AG04449 (cell line): ENCODE measurements at regions of chr3 and their contacts with region 1.

Region 1: GRCh38 chr3:58305882-58306711 is at the starts of genes HTD2 and RPP14:
- DNase-seq: peak; percentile 76
- H3K4me3 ChIP-seq: peak within 1 kb of the TSS; percentile 84
- CTCF ChIP-seq: peak; percentile 98

Region 2: DNA sequence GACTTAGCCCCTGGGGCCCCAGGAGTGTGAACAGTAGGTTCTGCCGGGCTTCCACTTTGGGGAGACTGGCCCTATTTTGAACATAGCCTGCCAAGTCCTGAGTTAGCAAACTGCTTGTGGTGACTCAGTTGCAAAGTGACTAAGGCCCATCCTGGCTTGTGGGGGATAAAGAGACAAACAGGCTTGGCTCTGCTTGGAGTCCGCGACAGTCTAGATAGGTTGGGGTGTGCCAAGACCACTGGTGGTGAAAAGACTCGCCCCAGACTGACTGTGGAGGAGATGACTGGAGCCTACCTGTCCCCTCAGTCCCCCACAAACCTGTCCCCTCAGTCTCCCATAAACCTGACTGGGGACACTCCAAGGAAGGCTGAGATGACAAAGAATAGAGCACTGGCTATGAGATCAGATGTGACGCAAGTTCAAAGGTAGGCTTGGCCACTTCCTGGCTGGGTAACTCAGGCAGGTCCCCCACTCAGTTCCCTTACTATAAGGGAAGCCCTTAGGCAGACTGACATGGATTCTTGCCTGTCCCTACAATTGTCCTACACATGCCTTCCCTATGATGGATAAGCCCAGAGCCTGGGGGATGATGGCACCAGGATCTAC is 99.6 kb before region 1 on chr3:
- CTCF ChIA-PET with region 1: interaction called, 25 read pairs
- POLR2A ChIA-PET with region 1: no interaction called
- DNase-seq: no peak
- H3K4me3 ChIP-seq: no peak overlapping the region
- CTCF ChIP-seq: no peak

Region 3: DNA sequence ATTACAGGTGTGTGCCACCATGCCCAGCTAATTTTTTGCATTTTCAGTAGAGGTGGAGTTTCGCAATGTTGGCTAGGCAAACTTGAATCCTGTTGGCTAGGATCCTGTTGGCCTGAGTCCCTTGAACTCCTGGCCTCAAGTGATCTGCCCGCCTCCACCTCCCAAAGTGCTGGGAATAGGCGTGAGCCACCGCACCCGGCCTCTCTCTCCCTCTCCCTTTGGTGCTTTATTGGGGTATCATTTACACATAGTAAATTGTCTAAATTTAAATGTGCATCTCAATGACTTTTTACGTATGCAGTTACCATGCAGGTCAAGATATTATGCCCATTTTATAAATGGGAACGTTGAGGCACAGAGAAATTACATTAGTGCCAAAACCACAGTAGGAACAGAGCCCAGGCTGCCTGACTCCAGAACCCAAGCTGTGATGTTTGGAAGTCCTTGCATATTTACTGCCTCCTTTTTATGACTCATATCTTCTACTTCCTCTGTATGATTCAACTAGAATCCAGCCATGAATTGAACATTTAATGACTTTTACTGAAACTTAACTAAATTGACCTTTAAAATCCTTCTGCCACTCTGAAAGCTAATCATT is 34.1 kb before region 1 on chr3:
- CTCF ChIA-PET with region 1: interaction called, 25 read pairs
- POLR2A ChIA-PET with region 1: no interaction called
- DNase-seq: peak; percentile 71
- H3K4me3 ChIP-seq: no peak overlapping the region
- CTCF ChIP-seq: no peak

Region 4: DNA sequence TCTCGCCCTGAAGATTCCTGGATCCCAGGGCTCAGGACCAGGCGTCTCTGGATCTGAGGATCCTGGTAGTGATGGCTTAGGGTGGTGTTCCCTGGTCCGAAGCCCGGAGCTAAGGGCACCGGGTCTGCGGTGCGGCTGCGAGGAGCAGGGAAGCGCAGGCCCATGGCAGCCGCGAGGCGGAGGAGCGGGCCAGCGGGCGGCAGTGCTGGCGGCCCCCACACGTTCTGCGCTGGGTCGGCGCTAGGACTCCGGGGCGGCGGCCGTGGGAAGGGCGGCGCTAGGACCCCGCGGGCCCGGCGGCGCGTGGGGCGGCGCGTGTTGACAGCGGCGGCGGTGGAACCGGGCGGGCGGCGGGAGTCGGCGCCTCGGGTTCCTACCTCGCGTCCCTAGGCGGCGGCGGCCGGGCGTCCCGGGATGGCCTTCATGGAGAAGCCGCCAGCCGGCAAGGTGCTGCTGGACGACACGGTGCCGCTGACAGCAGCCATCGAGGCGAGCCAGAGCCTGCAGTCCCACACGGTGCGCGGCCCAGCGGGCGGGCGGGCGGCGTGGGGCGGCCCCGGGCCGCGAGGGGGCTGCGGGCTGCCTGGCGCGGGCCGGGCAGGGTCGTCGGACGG is 26.6 kb after region 1 on chr3 and contains the start of gene PXK:
- CTCF ChIA-PET with region 1: interaction called, 19 read pairs
- POLR2A ChIA-PET with region 1: interaction called, 3 read pairs
- DNase-seq: no peak
- H3K4me3 ChIP-seq: peak within 1 kb of the TSS; percentile 75
- CTCF ChIP-seq: peak; percentile 48

Region 5: GRCh38 chr3:58419780-58420507 is 113.8 kb after region 1 on chr3:
- CTCF ChIA-PET with region 1: interaction called, 87 read pairs
- POLR2A ChIA-PET with region 1: no interaction called
- DNase-seq: no peak
- H3K4me3 ChIP-seq: no peak overlapping the region
- CTCF ChIP-seq: no peak

Region 6: DNA sequence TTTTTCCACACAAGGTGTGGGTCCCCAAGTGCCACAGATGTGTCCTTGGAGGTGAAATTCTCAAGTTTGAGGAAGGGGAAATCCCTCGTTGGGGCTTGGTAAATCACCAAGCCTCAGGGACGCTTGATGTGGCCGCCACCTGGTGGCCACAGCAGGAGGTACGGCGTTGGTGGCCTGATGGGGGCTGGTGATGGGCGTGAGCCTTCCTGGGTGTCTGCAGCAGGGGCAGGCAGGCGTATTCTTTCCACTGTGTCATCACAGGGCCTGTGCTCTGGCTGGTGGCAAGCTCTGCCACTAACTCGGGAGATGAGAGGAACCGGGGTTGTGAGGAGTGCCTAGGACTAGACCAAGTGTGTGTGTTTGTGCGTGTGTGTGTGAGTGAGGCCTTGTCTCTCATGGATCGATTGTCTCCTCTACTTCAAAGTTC is 226.7 kb after region 1 on chr3:
- CTCF ChIA-PET with region 1: interaction called, 79 read pairs
- POLR2A ChIA-PET with region 1: interaction called, 3 read pairs
- DNase-seq: no peak
- H3K4me3 ChIP-seq: no peak overlapping the region
- CTCF ChIP-seq: peak; percentile 93